ENCODE measurements at regions of chr14 and their contacts with region 1.

Region 1: DNA sequence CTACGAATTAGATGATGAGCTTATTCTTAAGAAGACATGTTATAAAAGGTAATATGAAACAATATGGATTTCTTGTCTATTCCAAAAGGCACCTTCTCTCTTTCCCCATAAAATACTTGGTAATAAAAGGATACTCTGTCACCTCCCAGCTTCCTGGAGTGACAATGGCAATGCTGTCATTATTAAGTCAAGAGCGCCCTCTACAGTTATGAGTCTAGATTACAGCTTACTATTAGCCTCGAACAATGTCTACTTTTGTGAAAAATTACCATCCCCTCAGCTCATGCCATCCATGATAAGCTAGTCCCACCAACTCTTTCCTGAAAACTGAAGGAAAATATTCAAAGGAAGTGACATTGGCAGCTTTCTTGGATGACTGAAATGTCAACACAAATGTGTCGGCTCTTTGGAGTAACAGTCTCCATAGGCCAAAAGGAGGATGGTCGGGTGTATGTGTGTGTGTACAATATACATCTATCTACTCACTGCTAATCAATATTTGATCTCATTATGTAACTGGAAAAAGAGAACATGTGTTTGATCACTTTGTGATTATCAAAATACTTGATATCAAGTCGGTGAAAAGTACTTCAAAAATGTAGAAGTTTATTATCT is 48.7 kb upstream of the CDKN3 start:
- DNase-seq: no peak
- H3K4me3 ChIP-seq: no peak overlapping the region
- H3K27ac ChIP-seq: no peak overlapping the region
- H3K27me3 ChIP-seq: peaks cover 7% of the 10 kb centered on the region
- CTCF ChIP-seq: peak; percentile 63

Region 2: DNA sequence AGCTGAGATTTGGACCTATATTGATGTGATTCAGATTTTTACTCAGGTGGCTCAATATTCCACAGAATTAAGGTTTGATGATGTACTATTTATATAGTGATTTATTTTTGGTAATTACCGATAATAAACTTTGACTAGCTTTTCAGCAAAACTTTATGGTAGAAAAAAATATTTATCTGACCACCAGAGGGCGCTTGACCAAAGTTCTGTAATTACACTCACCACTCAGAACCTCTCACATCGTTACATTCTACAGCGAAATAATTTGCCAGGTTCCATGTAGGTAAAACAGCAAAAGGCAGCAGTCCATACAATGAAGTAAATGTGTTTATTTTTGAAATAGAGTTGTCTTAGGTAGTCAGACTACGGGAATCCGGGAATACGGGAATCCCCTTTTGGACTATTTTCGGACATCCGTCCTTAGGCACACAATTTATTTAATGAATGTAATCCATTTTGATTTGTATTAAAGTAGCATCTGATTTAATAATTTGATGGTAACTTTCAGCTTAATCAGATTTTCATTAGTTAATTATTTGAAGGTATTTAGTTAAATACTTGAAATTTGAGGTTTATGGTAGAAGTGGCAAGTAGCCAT is 1052.0 kb before region 1 on chr14:
- CTCF ChIA-PET with region 1: interaction called, 30 read pairs
- POLR2A ChIA-PET with region 1: no interaction called
- DNase-seq: no peak
- H3K4me3 ChIP-seq: no peak overlapping the region
- H3K27ac ChIP-seq: no peak overlapping the region
- H3K27me3 ChIP-seq: no peaks in the 10 kb centered on the region
- CTCF ChIP-seq: peak; percentile 52

Region 3: DNA sequence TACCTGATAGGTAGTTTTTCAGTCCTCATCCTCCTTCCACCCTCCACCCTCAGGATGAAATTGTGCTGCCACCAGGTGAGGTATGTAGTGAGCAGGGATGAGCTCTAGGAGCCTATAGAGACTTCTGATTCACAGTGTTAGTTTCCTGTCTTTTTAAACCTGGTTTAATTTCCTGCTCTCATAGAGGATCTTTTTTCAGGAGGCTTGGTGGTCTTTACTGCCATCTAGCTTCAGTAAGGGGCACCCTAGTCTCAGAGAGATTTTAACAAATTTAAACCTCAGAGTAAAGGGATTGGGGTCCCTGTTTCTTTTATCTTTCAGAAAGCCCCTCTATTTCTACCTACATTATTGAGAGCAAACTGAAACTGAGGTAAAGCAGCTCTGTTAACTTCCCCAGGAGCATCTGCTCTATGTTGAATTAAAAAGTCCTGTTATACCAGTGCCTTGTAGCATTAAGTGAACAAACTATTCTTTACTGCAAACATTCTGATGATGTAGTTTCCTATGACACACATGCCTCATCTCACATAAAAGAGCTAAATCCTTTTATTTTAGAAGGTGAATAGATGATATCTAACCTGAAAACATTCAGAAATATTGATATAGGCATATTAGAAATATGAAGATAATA is 1022.8 kb before region 1 on chr14:
- CTCF ChIA-PET with region 1: interaction called, 13 read pairs
- POLR2A ChIA-PET with region 1: no interaction called
- DNase-seq: no peak
- H3K4me3 ChIP-seq: no peak overlapping the region
- H3K27ac ChIP-seq: no peak overlapping the region
- H3K27me3 ChIP-seq: no peaks in the 10 kb centered on the region
- CTCF ChIP-seq: peak; percentile 66

Region 4: GRCh38 chr14:53956427-53957201 is 391.5 kb before region 1 on chr14 and contains the start of gene BMP4:
- CTCF ChIA-PET with region 1: interaction called, 14 read pairs
- POLR2A ChIA-PET with region 1: no interaction called
- DNase-seq: no peak
- H3K4me3 ChIP-seq: peak within 1 kb of the TSS; percentile 64
- H3K27ac ChIP-seq: no peak within 1 kb of the TSS
- H3K27me3 ChIP-seq: peaks cover 63% of the 10 kb centered on the region
- CTCF ChIP-seq: no peak
- polyA plus RNA-seq, gene BMP4: 20.8 and 25.4 TPM in 2 replicates

Region 5: DNA sequence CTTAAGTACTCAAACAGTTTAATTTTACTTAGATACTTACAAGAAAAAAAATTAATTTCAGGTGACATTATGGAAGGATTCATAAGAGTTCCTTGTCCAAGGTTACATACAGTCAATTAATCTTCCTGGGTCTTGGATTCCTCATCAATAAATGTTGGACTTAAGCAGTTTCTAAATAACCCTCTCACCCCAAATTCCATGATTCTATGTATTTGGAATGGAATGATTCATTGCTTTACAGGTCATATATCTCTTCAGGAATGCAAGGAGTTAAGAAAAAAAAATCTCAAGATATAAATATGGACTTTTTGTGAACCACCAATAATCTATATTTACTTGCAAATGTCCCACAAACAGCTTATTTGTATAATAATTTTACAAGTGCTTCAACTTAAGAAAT is 307.3 kb before region 1 on chr14:
- CTCF ChIA-PET with region 1: no interaction called
- POLR2A ChIA-PET with region 1: no interaction called
- DNase-seq: no peak
- H3K4me3 ChIP-seq: no peak overlapping the region
- H3K27ac ChIP-seq: no peak overlapping the region
- H3K27me3 ChIP-seq: no peaks in the 10 kb centered on the region
- CTCF ChIP-seq: no peak

Region 6: GRCh38 chr14:54366736-54367735 is 18.9 kb after region 1 on chr14:
- CTCF ChIA-PET with region 1: interaction called, 19 read pairs
- POLR2A ChIA-PET with region 1: no interaction called
- DNase-seq: peak; percentile 32
- H3K4me3 ChIP-seq: no peak overlapping the region
- H3K27ac ChIP-seq: peak overlapping the region; percentile 25
- H3K27me3 ChIP-seq: no peaks in the 10 kb centered on the region
- CTCF ChIP-seq: peak; percentile 65

Region 7: GRCh38 chr14:54440873-54441868 is 93.1 kb after region 1 on chr14 and contains the start of gene CNIH1:
- CTCF ChIA-PET with region 1: no interaction called
- POLR2A ChIA-PET with region 1: no interaction called
- DNase-seq: peak; percentile 72
- H3K4me3 ChIP-seq: peak within 1 kb of the TSS; percentile 80
- H3K27ac ChIP-seq: peak within 1 kb of the TSS; percentile 94
- H3K27me3 ChIP-seq: peaks cover 2% of the 10 kb centered on the region
- CTCF ChIP-seq: peak; percentile 87
- polyA plus RNA-seq, gene CNIH1: 248 and 254 TPM in 2 replicates